ENCODE measurements at regions of chr13 and their contacts with region 1.

Region 1: DNA sequence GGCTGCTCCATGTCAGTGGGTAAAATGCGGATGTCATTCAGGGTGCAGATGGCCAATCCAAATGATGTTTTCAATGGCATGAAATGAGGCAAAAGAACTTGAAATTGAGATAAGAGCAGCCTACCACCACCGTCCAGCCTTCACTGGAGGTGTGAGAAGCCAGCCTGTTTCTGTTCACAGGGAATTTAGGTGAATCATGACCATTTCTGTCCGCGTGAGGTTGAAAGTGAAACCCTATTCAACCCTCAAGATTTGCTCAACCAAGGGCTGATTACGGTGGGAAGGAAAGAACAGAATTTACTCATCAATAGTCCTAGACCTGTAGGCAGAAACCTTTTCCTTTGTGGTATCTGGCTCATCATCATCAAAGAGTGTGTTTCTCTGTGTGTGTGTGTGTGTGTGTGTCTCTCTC is 370.7 kb downstream of the COG6 start:
- DNase-seq: peak; percentile 67
- H3K4me3 Mint-ChIP-seq: peak overlapping the region; percentile 24
- H3K27ac Mint-ChIP-seq: peak overlapping the region; percentile 48
- H3K4me1 Mint-ChIP-seq: peaks cover 59% of the 10 kb centered on the region
- H3K27me3 Mint-ChIP-seq: peaks cover 5% of the 10 kb centered on the region

Region 2: DNA sequence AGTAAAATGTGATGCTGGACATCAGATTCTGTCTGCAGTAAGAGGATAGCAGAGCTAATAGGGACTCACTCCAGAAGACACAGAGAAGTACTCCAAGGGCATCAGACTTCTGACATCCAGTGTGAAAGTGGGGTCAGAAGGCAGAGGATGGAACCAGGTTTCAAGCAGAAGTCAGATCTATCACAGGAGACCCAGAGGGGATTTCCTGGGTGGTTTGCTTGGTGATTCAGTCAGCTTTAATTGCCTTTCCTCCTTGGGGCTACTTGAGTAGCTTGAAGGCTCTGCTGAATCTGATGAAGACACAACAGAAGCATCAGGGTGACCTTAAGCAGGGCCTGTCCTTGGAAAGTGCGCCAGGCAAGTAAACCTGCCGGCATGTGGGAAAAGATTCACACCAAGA is 70.1 kb before region 1 on chr13:
- intact Hi-C with region 1: loop called (anchors 1 kb)
- DNase-seq: peak; percentile 41
- H3K4me3 Mint-ChIP-seq: peak overlapping the region; percentile 54
- H3K27ac Mint-ChIP-seq: peak overlapping the region; percentile 76
- H3K4me1 Mint-ChIP-seq: peaks cover 38% of the 10 kb centered on the region
- H3K27me3 Mint-ChIP-seq: peaks cover 5% of the 10 kb centered on the region

Region 3: GRCh38 chr13:40109356-40109844 is 83.2 kb after region 1 on chr13:
- intact Hi-C with region 1: loop called (anchors 1 kb)
- DNase-seq: no peak
- H3K4me3 Mint-ChIP-seq: no peak overlapping the region
- H3K27ac Mint-ChIP-seq: peak overlapping the region; percentile 31
- H3K4me1 Mint-ChIP-seq: peaks cover 47% of the 10 kb centered on the region
- H3K27me3 Mint-ChIP-seq: no peaks in the 10 kb centered on the region

Region 4: DNA sequence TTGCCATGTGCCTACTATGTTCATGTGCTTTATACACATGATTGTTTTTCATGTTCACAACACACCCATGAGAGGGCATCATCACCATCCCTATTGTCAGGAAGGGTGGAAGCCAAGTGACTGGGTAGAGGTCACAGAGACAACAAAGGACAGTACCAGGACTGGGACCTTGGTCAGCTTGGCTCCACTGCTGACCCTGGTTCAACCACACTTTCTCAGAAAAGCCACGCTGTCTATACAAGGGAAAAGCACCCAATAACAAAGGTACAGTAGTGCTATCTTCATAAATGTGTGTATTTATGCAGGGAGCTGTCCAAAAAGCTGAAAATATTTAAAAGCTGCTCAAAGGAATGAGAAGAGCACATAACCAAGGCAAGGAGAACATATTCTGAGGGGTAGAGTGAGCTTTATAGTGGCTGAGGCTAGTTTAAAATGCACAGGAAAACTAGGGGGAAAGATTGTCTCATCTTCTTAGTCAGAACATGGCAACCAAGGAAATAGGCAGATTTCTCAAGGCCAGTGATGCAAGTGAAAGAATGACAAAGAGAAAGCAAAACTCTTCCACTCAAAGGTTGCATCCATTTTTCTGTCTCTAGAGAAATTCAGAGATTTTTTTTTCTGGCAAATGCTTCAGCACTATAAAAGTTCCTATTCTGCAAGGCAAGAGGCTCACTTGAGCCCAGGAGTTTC is 225.3 kb after region 1 on chr13:
- intact Hi-C with region 1: loop called (anchors 1 kb)
- DNase-seq: peak; percentile 4
- H3K4me3 Mint-ChIP-seq: no peak overlapping the region
- H3K27ac Mint-ChIP-seq: peak overlapping the region; percentile 78
- H3K4me1 Mint-ChIP-seq: peaks cover 39% of the 10 kb centered on the region
- H3K27me3 Mint-ChIP-seq: no peaks in the 10 kb centered on the region

Region 5: DNA sequence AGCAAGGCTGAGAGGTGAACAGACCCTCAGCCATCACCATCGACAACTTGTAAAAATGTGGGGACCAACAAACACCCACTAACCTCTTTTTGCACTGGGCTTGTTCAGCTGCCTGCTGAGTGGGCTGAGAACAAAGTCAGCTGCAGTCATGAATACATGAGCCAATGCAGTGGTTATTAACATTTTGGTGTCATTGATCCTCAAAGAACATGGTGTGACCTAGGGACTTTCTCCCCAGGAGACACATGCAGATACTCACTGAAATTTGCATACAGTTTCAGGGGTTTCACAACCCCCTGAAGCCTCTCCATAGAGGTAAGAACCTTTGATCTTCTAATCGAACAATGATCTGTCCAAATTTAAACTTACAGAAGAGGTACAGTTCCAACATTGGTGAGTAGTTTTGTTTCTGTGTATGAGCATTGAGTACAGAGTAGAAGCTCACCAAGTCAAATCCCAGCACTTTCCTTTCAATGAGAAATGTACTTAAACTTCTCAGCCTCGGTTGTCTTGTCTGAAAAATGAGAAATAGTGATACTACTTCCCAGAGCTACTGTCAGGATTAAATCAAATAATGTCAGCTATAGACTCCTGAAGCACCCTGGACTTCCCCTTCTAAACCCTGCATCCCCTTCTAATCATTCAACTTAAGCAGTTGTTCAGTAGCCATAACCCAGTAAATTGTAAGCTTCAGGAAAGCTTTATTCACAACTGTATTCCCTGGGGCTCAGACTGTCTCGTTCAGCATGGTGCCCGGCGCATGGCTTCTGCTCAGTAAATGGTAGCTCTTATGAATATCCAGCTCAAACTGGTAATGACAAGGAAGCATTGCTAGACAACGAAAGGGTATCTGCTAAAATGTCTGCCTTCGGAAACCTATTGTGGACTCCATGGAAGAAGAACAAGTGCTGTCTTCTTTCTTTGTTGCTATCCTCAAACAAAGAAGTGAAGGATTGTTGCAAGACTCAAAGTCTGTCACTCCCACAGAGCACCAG is 491.6 kb after region 1 on chr13:
- intact Hi-C with region 1: loop called (anchors 1 kb)
- DNase-seq: no peak
- H3K4me3 Mint-ChIP-seq: peak overlapping the region; percentile 62
- H3K27ac Mint-ChIP-seq: peak overlapping the region; percentile 69
- H3K4me1 Mint-ChIP-seq: peaks cover 83% of the 10 kb centered on the region
- H3K27me3 Mint-ChIP-seq: no peaks in the 10 kb centered on the region

Region 6: GRCh38 chr13:41004875-41005693 is 978.9 kb after region 1 on chr13:
- intact Hi-C with region 1: loop called (anchors 2 kb)
- DNase-seq: no peak
- H3K4me3 Mint-ChIP-seq: peak overlapping the region; percentile 59
- H3K27ac Mint-ChIP-seq: peak overlapping the region; percentile 88
- H3K4me1 Mint-ChIP-seq: peaks cover 66% of the 10 kb centered on the region
- H3K27me3 Mint-ChIP-seq: no peaks in the 10 kb centered on the region